ENCODE measurements at regions of chr11 and their contacts with region 1.

Region 1: DNA sequence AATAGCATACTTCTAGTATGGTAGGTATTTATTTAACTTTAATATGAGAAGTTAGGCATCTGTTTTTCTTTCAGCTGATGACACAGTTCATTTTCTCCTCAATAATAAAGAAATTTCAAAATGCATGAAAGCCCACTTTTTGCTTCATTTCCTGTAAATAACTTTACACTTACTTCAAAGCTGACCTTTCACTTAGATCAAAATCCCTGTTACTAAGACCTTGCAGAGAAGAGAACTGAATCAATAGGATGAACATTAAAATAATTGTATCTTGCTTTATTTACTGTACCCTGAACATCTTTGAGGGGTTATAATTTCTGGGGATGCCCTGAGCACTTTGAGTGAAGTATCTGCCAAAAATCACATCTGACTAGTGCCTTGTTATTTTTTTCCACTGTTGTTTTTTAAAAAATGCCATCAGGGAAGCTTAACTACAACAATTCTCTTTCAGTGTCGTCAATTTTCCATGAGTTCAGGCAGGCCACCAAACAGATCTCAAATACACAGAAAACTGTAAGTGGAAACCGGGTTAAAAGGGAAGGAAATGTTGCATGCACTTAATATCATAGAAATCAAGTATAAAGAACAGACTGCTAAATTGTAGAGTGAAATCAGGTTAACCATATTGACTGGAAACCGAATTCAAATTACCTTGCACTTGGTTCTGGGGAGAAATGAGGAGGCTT is 206.2 kb downstream of the MAML2 start:
- DNase-seq: peak in 2 of 9 donors; percentile 13 to 36
- ATAC-seq: no peak
- H3K4me3 ChIP-seq: no peak overlapping the region
- H3K4me3 Mint-ChIP-seq: peak overlapping the region; percentile 6 to 73 (median 58)
- H3K27ac ChIP-seq: no peak overlapping the region
- H3K27ac Mint-ChIP-seq: peak overlapping the region; percentile 41 to 88 (median 79)
- H3K4me1 ChIP-seq: peaks cover 19 to 61% of the 10 kb centered on the region in 2 donors
- H3K4me1 Mint-ChIP-seq: peaks cover 47 to 89% (median 81%) of the 10 kb centered on the region in 7 donors
- H3K27me3 ChIP-seq: no peaks in the 10 kb centered on the region
- H3K27me3 Mint-ChIP-seq: no peaks in the 10 kb centered on the region

Region 2: GRCh38 chr11:96112201-96113128 is 24.3 kb before region 1 on chr11:
- CTCF ChIA-PET with region 1: no interaction called
- POLR2A ChIA-PET with region 1: interaction called, 3 read pairs
- intact Hi-C with region 1: loop called in 1 of 2 experiments (anchors 2 kb)
- DNase-seq: no peak
- ATAC-seq: no peak
- H3K4me3 ChIP-seq: no peak overlapping the region
- H3K4me3 Mint-ChIP-seq: peak overlapping the region in 3 of 10 donors; percentile 13 to 38 (median 26)
- H3K27ac ChIP-seq: no peak overlapping the region
- H3K27ac Mint-ChIP-seq: peak overlapping the region; percentile 22 to 74 (median 49)
- H3K4me1 ChIP-seq: peaks cover 0 to 11% of the 10 kb centered on the region in 2 donors
- H3K4me1 Mint-ChIP-seq: peaks cover 19 to 66% (median 46%) of the 10 kb centered on the region in 7 donors
- H3K27me3 ChIP-seq: no peaks in the 10 kb centered on the region
- H3K27me3 Mint-ChIP-seq: no peaks in the 10 kb centered on the region

Region 3: GRCh38 chr11:96119211-96119610 is 17.5 kb before region 1 on chr11:
- CTCF ChIA-PET with region 1: no interaction called
- POLR2A ChIA-PET with region 1: interaction called, 4 read pairs
- intact Hi-C with region 1: loop called in 1 of 2 experiments (anchors 2 kb)
- DNase-seq: no peak
- ATAC-seq: no peak
- H3K4me3 ChIP-seq: no peak overlapping the region
- H3K4me3 Mint-ChIP-seq: no peak overlapping the region
- H3K27ac ChIP-seq: no peak overlapping the region
- H3K27ac Mint-ChIP-seq: peak overlapping the region in 2 of 9 donors; percentile 15 to 17
- H3K4me1 ChIP-seq: peaks cover 4 to 13% of the 10 kb centered on the region in 2 donors
- H3K4me1 Mint-ChIP-seq: peaks cover 13 to 85% (median 64%) of the 10 kb centered on the region in 7 donors
- H3K27me3 ChIP-seq: no peaks in the 10 kb centered on the region
- H3K27me3 Mint-ChIP-seq: no peaks in the 10 kb centered on the region

Region 4: GRCh38 chr11:96146765-96147164 is 10.0 kb after region 1 on chr11:
- CTCF ChIA-PET with region 1: interaction called, 3 read pairs
- POLR2A ChIA-PET with region 1: interaction called, 4 read pairs
- intact Hi-C with region 1: loop called in 1 of 2 experiments (anchors 1 kb)
- DNase-seq: no peak
- ATAC-seq: no peak
- H3K4me3 ChIP-seq: no peak overlapping the region
- H3K4me3 Mint-ChIP-seq: no peak overlapping the region
- H3K27ac ChIP-seq: no peak overlapping the region
- H3K27ac Mint-ChIP-seq: peak overlapping the region in 5 of 9 donors; percentile 9 to 64 (median 44)
- H3K4me1 ChIP-seq: peaks cover 0 to under 1% of the 10 kb centered on the region in 2 donors
- H3K4me1 Mint-ChIP-seq: peaks cover 5 to 66% (median 59%) of the 10 kb centered on the region in 7 donors
- H3K27me3 ChIP-seq: no peaks in the 10 kb centered on the region
- H3K27me3 Mint-ChIP-seq: no peaks in the 10 kb centered on the region

Region 5: GRCh38 chr11:96384150-96384549 is 247.4 kb after region 1 on chr11:
- CTCF ChIA-PET with region 1: no interaction called
- POLR2A ChIA-PET with region 1: no interaction called
- intact Hi-C with region 1: no loop called
- DNase-seq: peak in 4 of 9 donors; percentile 8 to 17 (median 12)
- ATAC-seq: no peak
- H3K4me3 ChIP-seq: no peak overlapping the region
- H3K4me3 Mint-ChIP-seq: peak overlapping the region; percentile 30 to 84 (median 71)
- H3K27ac ChIP-seq: peak overlapping the region; percentile 57
- H3K27ac Mint-ChIP-seq: peak overlapping the region; percentile 72 to 93 (median 88)
- H3K4me1 ChIP-seq: peaks cover 8 to 14% of the 10 kb centered on the region in 2 donors
- H3K4me1 Mint-ChIP-seq: peaks cover 29 to 66% (median 56%) of the 10 kb centered on the region in 7 donors
- H3K27me3 ChIP-seq: no peaks in the 10 kb centered on the region
- H3K27me3 Mint-ChIP-seq: no peaks in the 10 kb centered on the region

Region 6: GRCh38 chr11:96595011-96595410 is 458.3 kb after region 1 on chr11:
- CTCF ChIA-PET with region 1: no interaction called
- POLR2A ChIA-PET with region 1: no interaction called
- intact Hi-C with region 1: no loop called
- DNase-seq: no peak
- ATAC-seq: no peak
- H3K4me3 ChIP-seq: no peak overlapping the region
- H3K4me3 Mint-ChIP-seq: no peak overlapping the region
- H3K27ac ChIP-seq: no peak overlapping the region
- H3K27ac Mint-ChIP-seq: no peak overlapping the region
- H3K4me1 ChIP-seq: no peaks in the 10 kb centered on the region
- H3K4me1 Mint-ChIP-seq: no peaks in the 10 kb centered on the region
- H3K27me3 ChIP-seq: no peaks in the 10 kb centered on the region
- H3K27me3 Mint-ChIP-seq: peaks cover 0 to 6% (median 0%) of the 10 kb centered on the region in 5 donors